ENCODE measurements at regions of chr10 and their contacts with region 1.

Region 1: DNA sequence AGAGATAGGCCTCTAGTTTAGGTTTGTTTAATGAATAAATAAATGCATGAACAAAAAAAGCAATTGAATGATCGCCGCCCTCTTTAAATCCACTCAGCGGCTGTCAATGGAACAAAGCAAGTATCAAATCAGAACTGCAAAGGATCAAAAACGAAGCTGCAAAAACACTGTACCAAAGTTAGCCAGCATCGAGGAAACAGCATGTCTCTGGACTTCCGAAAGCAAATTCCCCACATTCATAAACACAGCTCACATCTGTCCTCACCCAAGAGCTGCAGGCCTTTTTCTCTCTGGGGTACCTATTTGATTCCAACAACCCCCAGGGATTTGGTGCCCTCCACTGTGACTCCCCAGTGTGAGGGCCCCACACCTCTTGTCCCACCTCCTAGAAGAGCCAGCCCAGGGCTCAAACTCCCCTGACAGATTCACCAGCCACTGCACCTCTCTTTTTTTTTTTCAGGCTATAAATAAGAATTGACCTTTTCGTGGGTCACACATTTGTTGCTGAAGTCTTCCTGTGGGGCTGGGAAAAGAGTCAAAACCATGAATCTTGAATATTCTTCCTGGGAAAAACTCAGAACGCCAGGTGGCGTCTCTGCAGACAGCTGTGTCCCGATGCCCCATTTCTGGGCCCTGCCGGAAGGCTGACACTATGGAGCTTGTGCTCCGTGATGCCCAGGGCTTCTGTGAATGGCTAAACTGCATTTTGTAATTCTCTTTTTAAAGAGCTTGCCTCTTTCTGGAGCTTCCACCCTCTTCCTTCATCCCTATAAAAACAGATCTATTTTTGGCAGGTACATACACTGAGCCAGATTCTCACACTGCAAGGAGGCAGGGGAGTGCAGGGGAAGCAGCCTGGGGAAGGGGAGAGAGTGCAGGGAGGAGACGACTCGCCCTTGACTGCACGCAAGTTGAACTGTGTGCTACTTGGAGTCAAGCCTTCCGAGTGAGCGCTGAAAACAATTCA is 51.7 kb downstream of the HSPA12A start:
- DNase-seq: no peak
- H3K4me3 ChIP-seq: no peak overlapping the region
- H3K27ac ChIP-seq: no peak overlapping the region
- H3K4me1 ChIP-seq: no peaks in the 10 kb centered on the region
- H3K27me3 ChIP-seq: no peaks in the 10 kb centered on the region
- CTCF ChIP-seq: no peak

Region 2: DNA sequence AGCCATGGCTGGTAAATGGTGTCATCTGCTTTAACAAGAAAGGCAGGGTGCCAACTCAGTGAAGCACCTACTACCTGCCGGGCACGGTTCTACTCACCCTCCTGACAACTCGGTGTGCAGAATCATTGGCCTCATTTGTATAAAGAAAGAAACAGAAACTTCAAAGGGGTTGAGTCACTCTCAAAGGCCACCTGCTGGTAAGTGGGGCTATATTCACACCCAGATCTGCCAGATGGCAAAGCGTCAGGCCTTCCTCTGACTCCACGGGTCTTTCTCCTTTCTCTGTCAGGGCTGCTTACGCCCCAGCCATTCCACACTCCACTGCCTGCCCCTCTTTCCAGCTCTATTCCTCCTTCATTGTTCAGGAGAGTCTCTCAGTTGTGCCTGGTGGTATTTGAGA is 726.8 kb before region 1 on chr10:
- CTCF ChIA-PET with region 1: no interaction called
- dilution Hi-C with region 1: no loop called
- in situ Hi-C with region 1: no loop called
- intact Hi-C with region 1: no loop called
- DNase-seq: no peak
- H3K4me3 ChIP-seq: no peak overlapping the region
- H3K27ac ChIP-seq: no peak overlapping the region
- H3K4me1 ChIP-seq: no peaks in the 10 kb centered on the region
- H3K27me3 ChIP-seq: no peaks in the 10 kb centered on the region
- CTCF ChIP-seq: no peak

Region 3: DNA sequence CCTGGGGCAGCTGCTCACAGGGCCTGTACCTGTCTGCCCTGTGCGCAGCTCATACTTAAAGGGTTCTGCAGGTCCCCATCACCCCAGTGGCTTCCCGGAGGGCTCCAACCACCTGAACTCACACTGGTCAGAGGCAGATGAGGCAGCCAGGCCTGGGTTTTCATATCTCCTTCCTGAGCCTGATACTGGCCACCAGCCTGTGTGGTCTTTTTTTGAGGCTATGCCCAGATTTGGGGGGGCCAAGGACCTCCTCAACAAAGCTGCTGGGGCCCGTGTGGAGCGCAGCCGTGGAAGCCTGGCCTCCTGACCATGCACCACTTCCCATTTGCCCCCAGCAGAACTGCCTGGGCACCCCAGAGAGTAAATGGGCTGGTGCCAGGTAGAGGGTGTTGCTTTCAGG is 44.1 kb before region 1 on chr10:
- CTCF ChIA-PET with region 1: no interaction called
- dilution Hi-C with region 1: no loop called
- in situ Hi-C with region 1: no loop called
- intact Hi-C with region 1: no loop called
- DNase-seq: no peak
- H3K4me3 ChIP-seq: no peak overlapping the region
- H3K27ac ChIP-seq: no peak overlapping the region
- H3K4me1 ChIP-seq: no peaks in the 10 kb centered on the region
- H3K27me3 ChIP-seq: peaks cover 2% of the 10 kb centered on the region
- CTCF ChIP-seq: no peak

Region 4: GRCh38 chr10:116771101-116771958 is 80.7 kb after region 1 on chr10:
- CTCF ChIA-PET with region 1: no interaction called
- dilution Hi-C with region 1: loop called (anchors 5 kb)
- in situ Hi-C with region 1: no loop called
- intact Hi-C with region 1: no loop called
- DNase-seq: peak; percentile 91
- H3K4me3 ChIP-seq: no peak overlapping the region
- H3K27ac ChIP-seq: no peak overlapping the region
- H3K4me1 ChIP-seq: peaks cover 29% of the 10 kb centered on the region
- H3K27me3 ChIP-seq: no peaks in the 10 kb centered on the region
- CTCF ChIP-seq: no peak

Region 5: GRCh38 chr10:116787893-116788665 is 97.4 kb after region 1 on chr10:
- CTCF ChIA-PET with region 1: no interaction called
- dilution Hi-C with region 1: no loop called
- in situ Hi-C with region 1: loop called (anchors 5 kb)
- intact Hi-C with region 1: no loop called
- DNase-seq: peak; percentile 23
- H3K4me3 ChIP-seq: peak overlapping the region in 2 of 3 experiments; percentile 15 to 28
- H3K27ac ChIP-seq: no peak overlapping the region
- H3K4me1 ChIP-seq: peaks cover 8% of the 10 kb centered on the region
- H3K27me3 ChIP-seq: no peaks in the 10 kb centered on the region
- CTCF ChIP-seq: peak; percentile 91 to 97

Region 6: DNA sequence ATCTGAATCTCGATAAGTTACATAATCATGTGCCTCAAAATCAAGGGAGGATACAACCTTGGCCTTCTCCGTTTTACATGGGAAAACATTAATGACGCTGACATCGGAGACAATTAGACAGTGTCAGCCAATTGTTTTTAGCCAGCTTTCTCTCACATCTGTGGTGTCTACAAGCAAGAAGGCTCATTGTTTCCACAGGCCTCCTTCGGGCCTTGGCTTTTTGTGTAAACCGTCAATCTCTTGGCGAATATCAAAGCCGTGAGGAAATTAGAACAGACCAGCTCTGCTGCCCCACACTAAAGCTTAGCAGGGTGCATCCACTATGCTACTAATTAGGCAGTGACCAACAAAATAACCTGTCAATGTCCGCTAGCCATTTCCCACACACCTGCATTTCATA is 404.2 kb after region 1 on chr10:
- CTCF ChIA-PET with region 1: no interaction called
- dilution Hi-C with region 1: loop called (anchors 10 kb)
- in situ Hi-C with region 1: no loop called
- intact Hi-C with region 1: no loop called
- DNase-seq: no peak
- H3K4me3 ChIP-seq: no peak overlapping the region
- H3K27ac ChIP-seq: no peak overlapping the region
- H3K4me1 ChIP-seq: no peaks in the 10 kb centered on the region
- H3K27me3 ChIP-seq: peaks cover 3% of the 10 kb centered on the region
- CTCF ChIP-seq: no peak

Region 7: DNA sequence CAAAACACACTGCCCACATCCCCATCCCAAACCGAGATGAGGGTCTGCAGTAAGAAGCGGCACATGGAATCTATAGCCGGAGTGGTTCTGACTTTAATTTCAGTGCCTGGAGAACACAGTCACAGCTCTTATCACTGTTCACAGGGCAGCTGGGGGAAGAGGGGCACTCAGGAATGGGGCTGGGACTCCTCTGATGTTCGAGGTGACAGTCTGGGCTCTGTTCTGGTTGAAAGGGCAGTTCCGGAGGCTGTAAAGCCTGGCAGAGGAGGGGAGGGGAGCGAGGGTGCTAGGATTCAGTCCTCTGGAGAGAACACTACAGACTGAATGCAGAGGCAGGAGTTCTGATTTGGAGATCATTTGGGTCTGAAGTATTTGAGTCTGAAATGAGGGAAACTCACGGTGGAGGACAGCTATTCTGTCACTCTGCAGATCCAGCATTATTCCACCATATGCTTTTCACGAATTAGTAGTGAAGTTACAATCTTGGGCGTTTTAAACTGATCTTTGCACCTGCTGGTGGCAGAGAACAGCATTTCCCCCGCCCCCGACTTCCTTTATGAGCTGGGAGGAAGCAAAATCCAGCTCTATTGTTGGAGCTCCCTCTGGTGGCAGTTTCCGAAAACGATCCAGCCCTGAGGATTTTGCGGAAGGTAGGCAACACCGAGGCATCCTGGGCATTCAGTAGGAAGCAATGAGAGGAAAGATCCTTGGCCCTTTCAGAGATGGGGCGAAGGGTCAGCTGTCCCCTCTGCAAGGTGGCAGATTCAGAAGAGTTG is 484.0 kb after region 1 on chr10:
- CTCF ChIA-PET with region 1: no interaction called
- dilution Hi-C with region 1: loop called (anchors 10 kb)
- in situ Hi-C with region 1: loop called (anchors 10 to 25 kb)
- intact Hi-C with region 1: no loop called
- DNase-seq: peak; percentile 77
- H3K4me3 ChIP-seq: peak overlapping the region; percentile 43 to 51 (median 48)
- H3K27ac ChIP-seq: no peak overlapping the region
- H3K4me1 ChIP-seq: peaks cover 12% of the 10 kb centered on the region
- H3K27me3 ChIP-seq: peaks cover 8% of the 10 kb centered on the region
- CTCF ChIP-seq: peak; percentile 94 to 95

Region 8: DNA sequence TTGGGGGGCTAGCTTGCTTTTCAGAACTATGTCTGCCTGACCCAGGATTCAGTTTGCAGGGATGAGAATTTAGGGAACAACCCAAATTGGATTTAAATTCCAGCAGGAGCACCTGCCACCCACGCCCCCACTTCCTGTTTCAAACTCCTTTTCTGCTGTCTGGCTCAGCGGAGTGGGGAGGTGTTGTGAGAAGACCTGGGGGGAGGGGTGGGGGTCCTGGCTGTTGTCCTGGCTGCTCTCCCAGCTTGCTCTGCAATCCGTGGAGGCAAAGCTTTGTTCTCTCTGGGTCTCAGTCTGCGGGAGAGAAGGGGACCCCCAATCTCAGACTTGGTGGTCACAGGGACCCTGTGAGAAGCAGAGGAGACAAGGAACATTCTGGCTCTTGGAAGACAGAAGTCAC is 507.4 kb after region 1 on chr10:
- CTCF ChIA-PET with region 1: no interaction called
- dilution Hi-C with region 1: no loop called
- in situ Hi-C with region 1: no loop called
- intact Hi-C with region 1: no loop called
- DNase-seq: no peak
- H3K4me3 ChIP-seq: no peak overlapping the region
- H3K27ac ChIP-seq: no peak overlapping the region
- H3K4me1 ChIP-seq: no peaks in the 10 kb centered on the region
- H3K27me3 ChIP-seq: peaks cover 2% of the 10 kb centered on the region
- CTCF ChIP-seq: no peak

Measured in mammary epithelial cell (primary cell).